Head of caudate nucleus (tissue), 42 donors: ENCODE measurements at regions of chr2 and their contacts with region 1.

Region 1: GRCh38 chr2:231612179-231613053 is 19.8 kb downstream of the TEX44 start:
- DNase-seq: peak; percentile 79 to 98 (median 93)

Region 2: GRCh38 chr2:231662028-231662810 is 49.8 kb after region 1 on chr2:
- intact Hi-C with region 1: loop called (anchors 2 kb)
- DNase-seq: peak; percentile 83 to 99 (median 96)

Region 3: DNA sequence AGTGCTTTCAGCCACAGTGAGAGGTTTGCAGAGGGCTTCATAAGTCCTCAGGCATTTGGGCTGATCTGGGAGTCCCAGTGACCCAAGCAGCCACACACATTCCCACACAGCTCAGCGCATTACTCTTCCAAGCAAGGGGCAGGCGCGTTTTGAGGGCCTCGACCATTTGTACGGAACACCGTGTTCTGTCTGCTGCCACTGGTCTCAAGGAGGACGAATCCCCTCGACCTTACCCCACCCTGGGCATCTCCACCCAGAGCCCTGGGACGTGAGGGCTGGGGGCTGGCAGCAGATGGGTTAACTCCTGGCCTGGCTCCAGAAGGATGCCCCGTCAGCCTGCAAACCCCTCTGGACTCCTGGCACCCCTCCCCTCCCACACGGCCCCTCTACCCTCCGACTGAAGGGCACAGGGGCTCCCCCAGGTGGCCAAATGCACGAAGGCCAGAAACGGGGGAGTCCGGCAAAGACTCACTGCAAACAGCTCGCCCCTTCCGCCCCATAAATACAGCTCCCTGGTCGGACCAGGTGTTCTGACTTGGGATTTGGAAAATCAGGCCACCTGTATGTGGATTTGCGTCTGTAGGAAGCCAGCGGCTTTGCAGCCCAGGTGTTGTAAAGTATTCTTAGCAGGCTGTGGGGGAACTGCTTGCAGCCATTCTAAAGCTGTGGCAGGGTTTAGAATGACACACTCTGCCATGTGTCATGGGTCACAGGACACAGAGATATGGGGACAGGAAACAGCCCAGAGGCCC is 62.3 kb after region 1 on chr2:
- intact Hi-C with region 1: loop called (anchors 2 kb)
- DNase-seq: peak; percentile 55 to 92 (median 79)

Region 4: DNA sequence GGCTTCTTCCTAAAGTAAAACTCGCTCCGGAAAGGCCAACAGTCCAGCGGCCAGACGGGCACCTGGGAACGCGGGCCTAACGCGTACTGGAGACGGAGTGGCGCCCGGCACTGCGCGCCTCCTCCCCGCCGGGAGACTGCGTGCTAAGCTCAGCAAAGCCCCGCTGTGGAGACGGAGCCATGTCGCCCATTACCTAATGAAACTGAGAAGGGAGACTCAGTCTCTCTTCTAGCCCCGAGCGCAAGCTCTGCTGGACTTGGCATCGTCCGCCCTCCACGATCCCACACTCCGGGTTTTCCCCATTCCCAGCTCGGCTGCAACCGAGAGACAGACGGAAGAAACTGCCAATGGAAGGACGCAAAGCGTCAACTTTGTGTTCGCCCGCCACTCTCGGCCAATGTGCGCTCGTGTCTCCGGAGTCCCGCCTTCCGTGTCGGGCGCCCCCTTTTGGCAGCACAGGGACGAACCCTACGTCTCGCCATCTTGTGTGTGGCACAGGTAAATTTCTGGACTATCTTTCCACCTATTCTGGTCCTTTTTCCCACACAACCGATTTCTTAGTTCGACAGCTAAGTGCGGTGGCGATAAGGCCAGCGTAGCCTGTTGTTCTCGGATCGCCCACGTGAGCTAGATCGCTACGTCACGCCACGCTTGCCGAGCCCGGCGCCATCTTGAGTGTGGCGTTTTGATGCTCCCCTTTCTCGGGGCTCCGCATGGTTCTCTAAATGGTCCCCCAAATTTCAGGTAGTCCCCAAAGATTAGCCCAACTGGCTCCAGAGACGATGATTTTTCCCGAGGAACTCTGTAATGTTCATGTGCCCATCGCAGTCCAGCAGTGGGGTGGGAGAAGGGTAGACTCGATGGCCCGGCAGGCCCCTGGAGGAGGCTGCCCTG is 94.6 kb after region 1 on chr2:
- intact Hi-C with region 1: loop called (anchors 2 kb)
- DNase-seq: peak; percentile 97 to 100 (median 99)

Region 5: GRCh38 chr2:231780909-231781797 is 168.7 kb after region 1 on chr2 and contains the start of gene PDE6D:
- intact Hi-C with region 1: loop called (anchors 10 kb)
- DNase-seq: peak; percentile 95 to 100 (median 99)